Activated CD8-positive, alpha-beta T cell treated with anti-CD3 and anti-CD28 coated beads, Interleukin-2, amount 10 ng/mL, durations not matched to agents 7 days and 5 days (primary cell): ENCODE measurements at regions of chr1 and their contacts with region 1.

Region 1: DNA sequence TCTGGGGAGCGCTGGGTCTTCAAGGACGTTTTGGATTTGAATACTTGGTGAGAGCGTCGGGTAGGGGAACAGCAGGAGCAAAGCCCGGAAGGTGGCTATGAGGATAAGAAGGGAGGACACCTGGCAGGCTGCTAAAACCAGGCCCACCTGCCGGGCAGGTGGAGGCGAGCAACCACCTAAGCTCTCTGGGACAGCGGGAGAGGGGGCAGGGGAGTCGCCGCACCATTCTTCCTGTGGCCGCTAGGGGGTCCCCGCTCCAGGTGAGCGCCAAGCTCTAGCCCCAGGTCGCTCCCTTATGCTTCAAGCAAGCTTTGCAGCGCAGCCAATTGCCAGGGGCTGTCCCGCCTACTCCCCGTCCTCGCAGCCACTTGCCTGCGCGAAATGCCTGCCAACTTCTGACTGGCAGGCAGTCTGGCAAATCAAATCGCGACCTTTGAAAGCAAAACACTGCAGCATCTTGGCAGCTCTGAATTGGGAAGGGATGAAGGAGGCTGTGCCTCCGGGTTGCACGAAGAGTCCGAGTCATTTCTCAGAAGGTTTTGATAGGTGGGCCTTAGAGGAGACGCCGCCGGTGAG is at the start of gene NIPAL3:
- DNase-seq: peak; percentile 99
- ATAC-seq: peak; percentile 96
- H3K4me3 Mint-ChIP-seq: peak within 1 kb of the TSS; percentile 99
- H3K27ac Mint-ChIP-seq: peak within 1 kb of the TSS; percentile 90
- H3K4me1 Mint-ChIP-seq: peaks cover 65% of the 10 kb centered on the region
- H3K27me3 Mint-ChIP-seq: no peaks in the 10 kb centered on the region
- total RNA-seq, gene NIPAL3: 43.4 to 46.9 TPM

Region 2: DNA sequence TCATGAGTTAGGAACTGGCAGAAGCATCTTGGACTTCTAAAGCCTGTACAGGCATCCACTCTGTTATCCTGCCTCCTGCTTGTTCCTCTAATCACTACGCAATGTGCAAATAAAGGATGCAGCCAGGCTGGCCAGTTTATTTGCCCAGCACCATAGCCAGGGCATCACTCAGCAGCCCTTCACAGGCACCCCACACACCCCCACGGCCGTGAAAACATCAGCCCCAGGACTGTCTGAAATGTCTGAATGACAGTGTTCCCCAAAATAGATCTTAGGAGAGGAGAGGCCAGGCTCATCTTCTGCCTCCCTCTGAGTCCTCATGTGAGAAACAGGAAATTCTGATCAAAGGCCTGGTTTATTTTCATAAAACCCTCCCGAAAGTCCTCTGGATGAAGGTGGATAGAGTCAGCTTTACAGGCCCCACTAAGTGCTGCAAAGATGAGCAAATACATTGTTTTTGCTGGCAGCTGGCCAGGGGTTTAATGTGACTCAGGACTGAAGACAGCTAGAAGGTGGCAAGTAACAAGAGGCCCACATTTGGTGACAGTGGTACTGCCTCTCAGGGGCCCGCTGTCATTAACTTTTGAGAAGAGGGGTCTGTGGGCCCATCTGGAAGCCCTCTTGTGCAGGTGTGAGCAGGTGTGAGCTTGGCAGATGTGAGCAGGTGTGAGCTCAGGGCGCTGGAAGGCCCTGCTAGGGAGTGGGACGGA is 63.3 kb before region 1 on chr1:
- CTCF ChIA-PET with region 1: no interaction called
- POLR2A ChIA-PET with region 1: no interaction called
- DNase-seq: no peak
- ATAC-seq: no peak
- H3K4me3 Mint-ChIP-seq: no peak overlapping the region
- H3K27ac Mint-ChIP-seq: no peak overlapping the region
- H3K4me1 Mint-ChIP-seq: peaks cover 22% of the 10 kb centered on the region
- H3K27me3 Mint-ChIP-seq: no peaks in the 10 kb centered on the region

Region 3: GRCh38 chr1:24385160-24385940 is 30.1 kb before region 1 on chr1:
- CTCF ChIA-PET with region 1: interaction called, 133 read pairs
- POLR2A ChIA-PET with region 1: no interaction called
- DNase-seq: peak; percentile 46
- ATAC-seq: peak; percentile 59
- H3K4me3 Mint-ChIP-seq: no peak overlapping the region
- H3K27ac Mint-ChIP-seq: peak overlapping the region; percentile 26
- H3K4me1 Mint-ChIP-seq: peaks cover 27% of the 10 kb centered on the region
- H3K27me3 Mint-ChIP-seq: no peaks in the 10 kb centered on the region

Region 4: DNA sequence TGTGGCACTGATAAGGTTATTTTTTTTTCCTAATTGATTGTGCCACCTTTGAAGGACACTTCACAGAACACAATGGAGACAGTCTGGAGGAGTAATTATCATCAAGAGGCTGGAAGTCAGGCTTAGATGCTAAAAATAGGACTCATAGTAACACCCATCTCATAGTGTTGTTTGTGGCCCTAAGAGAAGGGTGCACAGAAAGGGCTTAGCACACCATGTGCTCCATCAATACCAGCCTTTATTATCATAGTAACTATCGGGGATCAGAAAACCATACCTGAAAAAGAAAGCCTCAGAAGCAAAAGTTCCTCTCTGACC is 12.1 kb after region 1 on chr1:
- CTCF ChIA-PET with region 1: interaction called, 22 read pairs
- POLR2A ChIA-PET with region 1: interaction called, 5 read pairs
- DNase-seq: no peak
- ATAC-seq: no peak
- H3K4me3 Mint-ChIP-seq: no peak overlapping the region
- H3K27ac Mint-ChIP-seq: no peak overlapping the region
- H3K4me1 Mint-ChIP-seq: peaks cover 26% of the 10 kb centered on the region
- H3K27me3 Mint-ChIP-seq: no peaks in the 10 kb centered on the region

Region 5: GRCh38 chr1:24486331-24487065 is 71.1 kb after region 1 on chr1:
- CTCF ChIA-PET with region 1: interaction called, 56 read pairs
- POLR2A ChIA-PET with region 1: interaction called, 11 read pairs
- DNase-seq: peak; percentile 76
- ATAC-seq: peak; percentile 64
- H3K4me3 Mint-ChIP-seq: peak overlapping the region; percentile 51
- H3K27ac Mint-ChIP-seq: peak overlapping the region; percentile 92
- H3K4me1 Mint-ChIP-seq: peaks cover 72% of the 10 kb centered on the region
- H3K27me3 Mint-ChIP-seq: no peaks in the 10 kb centered on the region

Region 6: DNA sequence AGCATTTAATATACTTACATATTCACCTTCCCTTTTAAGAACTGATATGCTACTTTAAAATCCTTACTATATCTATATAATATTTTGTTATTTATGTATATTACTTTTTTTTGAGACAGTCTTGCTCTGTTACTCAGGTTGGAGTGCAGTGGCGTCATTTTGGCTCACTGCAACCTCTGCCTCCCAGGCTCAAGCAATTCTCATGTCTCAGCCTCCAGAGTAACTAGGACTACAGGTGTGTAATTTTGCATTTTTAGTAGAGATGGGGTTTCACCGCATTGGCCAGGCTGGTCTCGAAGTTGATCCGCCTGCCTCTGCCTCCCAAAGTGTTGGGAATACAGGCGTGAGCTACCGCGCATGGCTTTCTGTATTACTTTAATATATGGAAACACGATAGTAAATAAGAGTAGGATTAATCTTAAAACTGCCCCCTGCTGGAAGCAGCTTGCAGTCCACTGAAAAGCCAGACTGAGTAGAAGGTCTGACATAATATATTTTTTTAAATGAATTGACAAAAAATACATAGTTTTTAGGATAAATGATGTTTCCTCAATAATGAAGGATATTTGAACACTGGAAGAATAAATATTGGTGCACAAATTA is 111.6 kb after region 1 on chr1:
- CTCF ChIA-PET with region 1: interaction called, 159 read pairs
- POLR2A ChIA-PET with region 1: interaction called, 3 read pairs
- DNase-seq: peak; percentile 63
- ATAC-seq: peak; percentile 47
- H3K4me3 Mint-ChIP-seq: no peak overlapping the region
- H3K27ac Mint-ChIP-seq: no peak overlapping the region
- H3K4me1 Mint-ChIP-seq: peaks cover 21% of the 10 kb centered on the region
- H3K27me3 Mint-ChIP-seq: no peaks in the 10 kb centered on the region

Region 7: DNA sequence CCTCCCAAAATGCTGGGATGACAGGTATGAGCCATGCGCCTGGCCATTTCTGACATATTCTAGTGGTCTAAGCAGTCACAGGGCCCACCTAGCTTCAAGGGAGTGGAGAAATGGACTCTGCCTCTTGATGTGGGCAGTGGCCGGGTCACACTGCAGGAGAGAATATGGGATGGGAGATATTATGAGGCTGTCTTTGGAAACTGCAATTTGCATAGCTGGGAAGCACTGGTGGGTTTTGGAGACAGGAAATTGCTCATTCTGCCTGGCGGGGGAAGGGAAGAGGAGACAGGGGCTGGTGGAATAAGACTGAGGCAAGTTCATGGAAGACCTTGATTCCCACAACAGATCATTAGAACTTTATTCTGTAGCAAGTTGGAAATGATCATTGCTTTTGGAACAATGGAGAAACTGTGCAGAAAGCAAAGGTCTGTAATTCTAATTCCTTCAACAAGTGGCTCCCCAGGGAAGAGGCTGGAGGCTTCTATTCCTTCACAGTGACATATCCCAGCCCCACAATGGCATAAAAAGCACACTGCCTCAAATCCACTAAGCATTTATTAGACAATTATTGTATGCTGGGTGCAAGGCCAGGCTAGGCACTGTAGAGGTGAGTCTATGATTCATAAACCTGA is 150.9 kb after region 1 on chr1:
- CTCF ChIA-PET with region 1: no interaction called
- POLR2A ChIA-PET with region 1: no interaction called
- DNase-seq: no peak
- ATAC-seq: no peak
- H3K4me3 Mint-ChIP-seq: no peak overlapping the region
- H3K27ac Mint-ChIP-seq: no peak overlapping the region
- H3K4me1 Mint-ChIP-seq: peaks cover 6% of the 10 kb centered on the region
- H3K27me3 Mint-ChIP-seq: peaks cover 15% of the 10 kb centered on the region

Region 8: GRCh38 chr1:24586970-24587820 is 171.8 kb after region 1 on chr1:
- CTCF ChIA-PET with region 1: interaction called, 130 read pairs
- POLR2A ChIA-PET with region 1: no interaction called
- DNase-seq: peak; percentile 75
- ATAC-seq: peak; percentile 97
- H3K4me3 Mint-ChIP-seq: no peak overlapping the region
- H3K27ac Mint-ChIP-seq: no peak overlapping the region
- H3K4me1 Mint-ChIP-seq: peaks cover 13% of the 10 kb centered on the region
- H3K27me3 Mint-ChIP-seq: peaks cover 14% of the 10 kb centered on the region